Activated CD4-positive, alpha-beta memory T cell treated with anti-CD3 and anti-CD28 coated beads for 36 hours (primary cell): ENCODE measurements at regions of chr4 and their contacts with region 1.

Region 1: DNA sequence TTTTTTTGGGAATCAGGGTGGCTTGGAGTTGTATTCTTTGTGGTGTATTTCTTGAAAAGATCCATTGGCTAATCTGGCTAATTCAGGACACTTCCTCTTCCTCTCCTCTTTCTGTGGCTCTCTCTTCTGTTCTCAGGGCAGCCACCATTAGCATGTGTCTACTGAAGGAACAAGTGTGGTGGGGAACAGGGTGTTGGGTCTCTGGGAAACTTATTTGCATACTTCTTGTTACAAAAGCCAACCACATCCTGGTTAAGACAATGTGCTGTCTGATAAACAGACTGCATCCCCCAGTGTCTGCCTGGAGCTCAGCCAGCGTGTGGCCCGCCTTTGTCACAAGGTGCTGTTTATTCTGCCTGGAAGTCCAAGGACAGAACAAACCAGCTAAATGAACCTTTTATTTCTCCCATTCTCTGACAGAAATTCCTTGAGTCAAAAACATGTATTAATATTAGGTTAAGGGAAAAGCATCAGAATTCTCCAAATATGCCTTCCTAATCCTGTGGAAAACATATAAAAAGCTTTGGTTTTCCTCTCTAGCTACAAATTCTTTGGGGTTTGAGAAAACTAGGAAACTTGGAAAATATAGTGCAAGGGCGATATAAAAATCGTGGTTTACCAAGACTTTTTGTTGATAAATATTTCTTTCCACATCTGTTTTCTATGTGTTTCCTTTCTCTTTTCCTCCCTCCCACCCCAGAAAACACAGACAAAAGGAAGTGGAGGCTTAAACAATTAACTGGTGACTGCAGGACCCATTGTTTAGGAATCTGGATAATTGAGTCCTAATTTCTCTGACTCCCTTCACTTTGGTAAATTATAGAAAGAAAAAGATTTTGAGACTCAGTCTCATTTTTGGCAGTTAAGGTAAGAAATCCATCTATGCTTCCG is 203.6 kb downstream of the SPRY1 start:
- DNase-seq: peak; percentile 38
- H3K4me3 Mint-ChIP-seq: no peak overlapping the region
- H3K27ac Mint-ChIP-seq: peak overlapping the region; percentile 30
- H3K4me1 Mint-ChIP-seq: peaks cover 20% of the 10 kb centered on the region
- H3K27me3 Mint-ChIP-seq: no peaks in the 10 kb centered on the region

Region 2: GRCh38 chr4:123616951-123617461 is 16.8 kb after region 1 on chr4:
- CTCF ChIA-PET with region 1: interaction called, 3 read pairs
- POLR2A ChIA-PET with region 1: no interaction called
- intact Hi-C with region 1: loop called (anchors 2 kb)
- DNase-seq: peak; percentile 27
- H3K4me3 Mint-ChIP-seq: no peak overlapping the region
- H3K27ac Mint-ChIP-seq: no peak overlapping the region
- H3K4me1 Mint-ChIP-seq: peaks cover 12% of the 10 kb centered on the region
- H3K27me3 Mint-ChIP-seq: no peaks in the 10 kb centered on the region